Posterior vena cava (tissue), 2 donors: ENCODE measurements at regions of chr15 and their contacts with region 1.

Region 1: GRCh38 chr15:29747837-29748417 is 74.3 kb downstream of the TJP1 start:
- DNase-seq: no peak

Region 2: DNA sequence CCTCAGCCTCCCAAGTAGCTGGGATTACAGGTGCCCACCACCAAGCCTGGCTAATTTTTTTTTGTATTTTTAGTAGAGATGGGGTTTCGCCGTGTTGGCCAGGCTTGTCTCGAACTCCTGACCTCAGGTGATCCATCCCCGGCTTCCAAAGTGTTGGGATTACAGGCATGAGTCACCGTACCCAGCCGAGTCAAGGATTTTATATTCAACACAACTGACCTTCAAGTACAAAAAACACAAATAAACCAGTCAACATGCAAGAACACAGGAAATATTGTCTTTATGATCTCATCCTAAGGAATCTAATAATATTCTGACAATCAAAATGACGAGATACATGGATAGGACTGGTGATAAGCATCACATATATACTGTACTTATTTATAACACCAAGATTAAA is 36.5 kb after region 1 on chr15:
- intact Hi-C with region 1: no loop called
- DNase-seq: no peak

Region 3: DNA sequence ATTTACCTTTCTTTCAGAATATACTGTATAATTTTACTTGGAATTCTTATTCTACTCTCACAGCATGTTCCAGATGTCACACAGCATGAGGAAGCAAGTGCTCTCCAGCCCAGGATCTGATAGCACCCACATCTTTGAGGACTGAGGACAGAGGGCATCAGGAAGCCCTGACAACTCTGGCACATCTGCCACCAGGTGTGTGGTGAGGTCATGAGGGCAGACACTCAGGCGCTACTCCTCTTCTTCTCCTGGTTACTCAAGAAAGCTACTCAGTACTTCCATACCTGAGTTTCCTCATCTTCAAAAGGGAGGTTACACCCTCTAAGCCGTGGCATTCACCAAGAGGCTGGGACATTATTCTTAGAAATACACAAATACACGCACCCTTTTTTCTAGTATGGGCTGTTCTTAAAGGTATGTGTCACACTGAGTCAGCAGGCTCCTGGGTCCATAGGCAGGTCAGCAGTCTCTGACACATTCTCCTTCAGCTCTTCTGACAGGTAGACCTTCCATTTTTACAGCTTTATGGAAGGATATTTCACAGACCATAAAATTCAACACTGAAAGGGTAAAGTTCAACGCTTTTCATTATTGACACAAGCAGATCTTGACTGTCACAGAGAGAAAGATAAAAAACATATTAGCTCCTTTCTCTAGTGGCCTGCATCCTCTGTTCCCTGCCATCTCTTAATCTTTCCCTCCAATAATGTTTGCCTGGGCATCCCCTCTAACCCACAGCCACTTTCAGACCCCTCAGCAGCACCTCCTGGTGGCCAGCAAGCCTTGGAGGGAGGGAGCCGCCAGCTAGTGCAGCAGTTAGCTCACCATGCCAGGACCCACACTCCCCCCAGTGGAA is 177.5 kb after region 1 on chr15:
- intact Hi-C with region 1: loop called in 1 of 2 experiments (anchors 10 kb)
- DNase-seq: peak; percentile 89